ENCODE measurements at regions of chr12 and their contacts with region 1.

Region 1: DNA sequence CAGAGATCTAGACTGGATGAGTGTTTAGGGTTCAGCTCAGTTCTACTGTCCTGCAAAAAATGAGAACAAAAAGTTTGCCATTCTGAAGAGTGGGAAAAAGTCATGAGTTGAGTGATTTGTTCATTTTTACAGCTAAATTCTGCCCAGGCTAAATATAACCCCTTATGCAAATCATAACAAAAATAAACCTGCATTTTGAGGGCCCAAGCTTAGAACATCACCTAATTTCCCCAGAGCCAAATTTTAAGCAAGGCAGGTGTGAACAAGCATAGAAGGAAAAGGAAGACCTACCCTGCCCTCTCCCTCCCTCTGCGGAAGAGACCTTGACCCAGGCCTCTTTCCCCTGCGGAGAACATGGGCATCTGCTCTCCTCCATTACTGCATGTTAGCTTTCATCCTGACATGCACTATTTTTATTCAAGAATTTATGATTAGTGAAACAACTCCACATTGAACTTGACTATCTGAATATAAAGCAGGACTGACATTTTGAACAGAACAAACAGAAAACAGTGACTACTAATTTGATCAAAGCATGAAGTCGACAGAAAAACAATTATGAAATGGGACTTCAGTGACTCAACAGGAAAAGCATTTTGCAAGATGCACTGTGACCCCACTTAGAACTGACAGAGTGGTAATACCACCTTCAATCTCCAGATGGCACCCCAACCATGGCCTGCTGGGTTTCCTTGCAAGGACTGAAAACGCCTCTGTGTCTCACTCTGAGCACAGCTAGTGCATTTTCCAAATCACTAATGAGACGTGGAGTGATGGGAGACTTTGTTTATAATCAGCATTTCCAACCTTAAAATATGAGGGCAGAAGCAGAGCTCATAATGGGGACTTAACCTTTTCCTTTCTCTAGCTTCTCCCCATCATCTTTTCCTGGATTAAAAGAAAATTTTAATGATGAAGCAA is 30.9 kb upstream of the SELPLG start:
- DNase-seq: peak; percentile 84 to 88
- H3K4me3 ChIP-seq: no peak overlapping the region
- H3K27ac ChIP-seq: peak overlapping the region; percentile 51
- H3K4me1 ChIP-seq: peaks cover 7% of the 10 kb centered on the region
- H3K27me3 ChIP-seq: no peaks in the 10 kb centered on the region
- CTCF ChIP-seq: peak; percentile 95

Region 2: GRCh38 chr12:108722992-108723766 is 58.6 kb after region 1 on chr12:
- CTCF ChIA-PET with region 1: no interaction called
- POLR2A ChIA-PET with region 1: no interaction called
- intact Hi-C with region 1: loop called (anchors 2 kb)
- DNase-seq: peak in 1 of 2 experiments; percentile 92
- H3K4me3 ChIP-seq: peak overlapping the region; percentile 22; the same call in 1 of the 2 replicates
- H3K27ac ChIP-seq: peak overlapping the region; percentile 90
- H3K4me1 ChIP-seq: peaks cover 59% of the 10 kb centered on the region
- H3K27me3 ChIP-seq: no peaks in the 10 kb centered on the region
- CTCF ChIP-seq: no peak

Region 3: GRCh38 chr12:108731105-108731865 is 66.7 kb after region 1 on chr12 and contains the start of gene CORO1C:
- CTCF ChIA-PET with region 1: no interaction called
- POLR2A ChIA-PET with region 1: interaction called, 7 read pairs
- intact Hi-C with region 1: loop called (anchors 1 kb)
- DNase-seq: peak; percentile 85 to 98
- H3K4me3 ChIP-seq: peak within 1 kb of the TSS; percentile 85
- H3K27ac ChIP-seq: peak within 1 kb of the TSS; percentile 84
- H3K4me1 ChIP-seq: peaks cover 46% of the 10 kb centered on the region
- H3K27me3 ChIP-seq: no peaks in the 10 kb centered on the region
- CTCF ChIP-seq: peak; percentile 80
- total RNA-seq, gene CORO1C: 122 and 139 TPM in 2 replicates

Region 4: DNA sequence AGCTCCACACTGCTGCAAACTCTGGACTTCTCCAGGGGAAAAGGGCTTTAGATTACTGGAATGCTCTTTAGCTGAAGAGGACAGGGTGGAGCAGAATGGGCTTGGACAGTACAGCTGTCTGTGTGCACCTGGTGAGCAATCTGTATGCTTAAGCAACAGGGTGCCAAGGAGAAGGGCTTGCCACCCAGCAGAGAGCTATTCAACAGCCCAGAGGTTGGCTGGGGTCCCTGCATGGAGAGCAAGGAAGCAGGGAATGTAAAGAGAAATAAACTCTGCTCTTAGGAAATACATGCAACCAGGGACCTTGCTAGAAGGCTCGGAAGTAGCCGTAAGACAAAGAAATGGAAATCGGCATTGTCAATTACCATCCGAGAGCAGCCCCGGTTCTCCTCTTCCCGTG is 119.7 kb after region 1 on chr12:
- CTCF ChIA-PET with region 1: no interaction called
- POLR2A ChIA-PET with region 1: no interaction called
- intact Hi-C with region 1: loop called (anchors 5 kb)
- DNase-seq: no peak
- H3K4me3 ChIP-seq: no peak overlapping the region
- H3K27ac ChIP-seq: no peak overlapping the region
- H3K4me1 ChIP-seq: no peaks in the 10 kb centered on the region
- H3K27me3 ChIP-seq: no peaks in the 10 kb centered on the region
- CTCF ChIP-seq: no peak

Region 5: GRCh38 chr12:108803428-108804105 is 139.0 kb after region 1 on chr12:
- CTCF ChIA-PET with region 1: interaction called, 10 read pairs
- POLR2A ChIA-PET with region 1: no interaction called
- intact Hi-C with region 1: loop called (anchors 1 kb)
- DNase-seq: peak; percentile 58 to 65
- H3K4me3 ChIP-seq: no peak overlapping the region
- H3K27ac ChIP-seq: no peak overlapping the region
- H3K4me1 ChIP-seq: no peaks in the 10 kb centered on the region
- H3K27me3 ChIP-seq: no peaks in the 10 kb centered on the region
- CTCF ChIP-seq: peak; percentile 94

Region 6: GRCh38 chr12:108950991-108951739 is 286.6 kb after region 1 on chr12:
- CTCF ChIA-PET with region 1: no interaction called
- POLR2A ChIA-PET with region 1: no interaction called
- intact Hi-C with region 1: loop called (anchors 1 kb)
- DNase-seq: peak; percentile 41 to 73
- H3K4me3 ChIP-seq: no peak overlapping the region
- H3K27ac ChIP-seq: no peak overlapping the region
- H3K4me1 ChIP-seq: no peaks in the 10 kb centered on the region
- H3K27me3 ChIP-seq: peaks cover 30% of the 10 kb centered on the region
- CTCF ChIP-seq: peak; percentile 97

Region 7: GRCh38 chr12:109393437-109394345 is 729.1 kb after region 1 on chr12:
- CTCF ChIA-PET with region 1: no interaction called
- POLR2A ChIA-PET with region 1: no interaction called
- intact Hi-C with region 1: loop called (anchors 10 kb)
- DNase-seq: peak in 1 of 2 experiments; percentile 24
- H3K4me3 ChIP-seq: no peak overlapping the region
- H3K27ac ChIP-seq: no peak overlapping the region
- H3K4me1 ChIP-seq: no peaks in the 10 kb centered on the region
- H3K27me3 ChIP-seq: peaks cover 30% of the 10 kb centered on the region
- CTCF ChIP-seq: peak; percentile 85